K562 (cell line): ENCODE measurements at regions of chr6 and their contacts with region 1.

Region 1: DNA sequence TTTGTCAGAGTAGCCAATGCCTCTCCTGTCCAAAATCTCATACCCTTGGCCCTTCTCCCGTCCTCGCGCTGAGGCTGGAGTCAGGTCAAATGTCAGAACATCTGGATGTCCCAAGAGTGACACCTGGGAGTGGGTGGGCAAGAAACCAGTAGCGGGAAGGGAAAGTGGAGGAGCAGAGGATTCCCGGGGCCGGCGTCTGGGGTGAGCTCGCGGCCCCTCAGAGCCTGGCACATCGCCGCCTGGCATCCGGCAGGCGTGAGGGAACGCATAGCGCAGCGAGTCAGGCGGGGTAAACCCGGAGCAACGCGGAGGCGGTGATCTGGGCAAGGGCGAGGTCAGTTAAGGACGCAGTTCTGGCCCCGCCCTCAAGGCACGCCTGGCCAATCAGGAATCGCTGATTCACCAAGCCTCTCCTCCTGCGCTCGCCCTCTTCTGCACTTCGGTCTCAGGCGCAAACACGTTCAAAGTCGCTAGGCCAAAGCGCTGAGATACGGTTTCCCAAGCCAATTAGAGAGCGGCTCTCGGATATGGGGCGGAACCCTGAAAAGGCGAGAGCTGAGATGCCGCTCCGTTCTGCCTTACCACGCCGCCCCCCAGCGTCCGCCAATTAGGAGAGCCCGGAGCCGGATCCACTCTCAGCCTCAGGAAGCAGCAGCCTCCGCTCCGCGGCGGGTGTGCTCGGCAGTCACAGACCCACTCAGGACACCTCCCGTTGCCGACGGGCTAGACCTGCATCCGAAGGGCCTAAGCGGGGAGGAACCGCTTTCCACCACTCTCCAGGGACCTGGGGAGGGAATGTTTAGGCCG is 22.5 kb downstream of the VPS52 start:
- DNase-seq: peak; percentile 95 to 100 (median 96)
- ATAC-seq: peak; percentile 97
- H3K4me3 ChIP-seq: peak overlapping the region; percentile 53
- H3K27ac ChIP-seq: peak overlapping the region; percentile 91
- H3K4me1 ChIP-seq: peaks cover 22 to 31% of the 10 kb centered on the region in 2 experiments
- H3K27me3 ChIP-seq: peaks cover 4 to 6% of the 10 kb centered on the region in 2 experiments; a peak in 2 of 5 replicates
- CTCF ChIP-seq: peak; percentile 34 to 52 (median 48); a peak in 5 of 6 replicates
- EP300 ChIP-seq: 0 out of 2 replicates have a peak, but pooled peaks have one; percentile 6
- POLR2A ChIP-seq: peak; percentile 96
- RAD21 ChIP-seq: 0 out of 4 replicates have a peak, but pooled peaks of 1 of the 2 experiments have one; percentile 25

Region 2: DNA sequence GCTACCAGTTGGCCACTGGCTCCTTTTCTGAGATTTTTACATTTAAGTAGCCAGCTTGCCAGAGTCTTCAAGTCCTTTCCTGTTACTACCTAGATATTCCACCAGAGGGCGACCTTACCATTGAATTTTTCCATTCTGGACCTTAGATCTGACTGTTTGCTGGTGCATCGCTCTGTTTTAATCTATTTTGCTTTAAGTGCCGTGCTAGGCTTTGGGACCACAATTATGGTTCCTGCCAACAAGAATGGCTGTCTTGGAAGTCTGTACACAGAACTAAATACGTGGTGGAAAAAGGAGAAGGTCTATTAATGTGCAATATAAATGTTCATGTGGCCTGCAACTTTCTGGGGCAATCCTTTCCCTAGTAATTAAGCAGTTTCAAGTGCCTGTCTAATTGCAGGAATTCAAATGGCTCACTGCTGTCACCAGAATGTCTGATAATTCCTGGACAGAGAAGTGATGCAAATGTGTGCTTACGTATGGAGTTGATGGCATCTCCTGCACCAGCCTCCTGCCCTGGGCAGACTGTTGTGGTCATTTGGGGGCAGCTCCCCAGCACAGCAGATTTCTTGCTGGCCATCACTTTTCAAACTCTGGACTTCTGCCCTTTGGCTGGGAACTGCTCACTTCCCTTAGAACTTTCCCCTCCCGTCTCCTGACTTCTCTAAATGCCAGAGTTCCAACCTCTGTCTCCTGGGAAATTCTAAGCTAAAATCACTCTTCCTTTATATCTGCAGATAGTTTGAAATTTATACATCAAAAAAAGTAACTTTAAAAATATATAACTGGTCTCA is 234.1 kb before region 1 on chr6:
- CTCF ChIA-PET with region 1: interaction called, 7 read pairs
- POLR2A ChIA-PET with region 1: no interaction called
- in situ Hi-C with region 1: loop called (anchors 5 kb)
- intact Hi-C with region 1: loop called (anchors 1 kb)
- DNase-seq: peak; percentile 67 to 79 (median 73)
- ATAC-seq: peak; percentile 88
- H3K4me3 ChIP-seq: no peak overlapping the region
- H3K27ac ChIP-seq: no peak overlapping the region
- H3K4me1 ChIP-seq: no peaks in the 10 kb centered on the region
- H3K27me3 ChIP-seq: peaks cover 28 to 37% of the 10 kb centered on the region in 2 experiments; a peak in 4 of 5 replicates
- CTCF ChIP-seq: peak; percentile 74 to 92 (median 77)
- EP300 ChIP-seq: no peak
- POLR2A ChIP-seq: no peak
- RAD21 ChIP-seq: peak; percentile 80 to 87

Region 3: GRCh38 chr6:33126101-33126714 is 122.9 kb before region 1 on chr6:
- CTCF ChIA-PET with region 1: interaction called, 24 read pairs
- POLR2A ChIA-PET with region 1: interaction called, 12 read pairs
- in situ Hi-C with region 1: no loop called
- intact Hi-C with region 1: loop called (anchors 1 kb)
- DNase-seq: peak; percentile 75 to 79 (median 77)
- ATAC-seq: peak; percentile 91
- H3K4me3 ChIP-seq: no peak overlapping the region
- H3K27ac ChIP-seq: no peak overlapping the region
- H3K4me1 ChIP-seq: no peaks in the 10 kb centered on the region
- H3K27me3 ChIP-seq: peaks cover 5 to 26% of the 10 kb centered on the region in 2 experiments; a peak in 3 of 5 replicates
- CTCF ChIP-seq: peak; percentile 74 to 90 (median 79)
- EP300 ChIP-seq: no peak
- POLR2A ChIP-seq: no peak
- RAD21 ChIP-seq: peak in 1 of 2 experiments; percentile 41; a peak in 2 of 4 replicates

Region 4: GRCh38 chr6:33200219-33201146 is 48.6 kb before region 1 on chr6 and contains the starts of genes RXRB and SLC39A7:
- CTCF ChIA-PET with region 1: interaction called, 4 read pairs
- POLR2A ChIA-PET with region 1: interaction called, 7 read pairs
- in situ Hi-C with region 1: no loop called
- intact Hi-C with region 1: loop called (anchors 2 kb)
- DNase-seq: peak; percentile 88 to 100 (median 94)
- ATAC-seq: peak; percentile 74
- H3K4me3 ChIP-seq: peak within 1 kb of the TSS; percentile 65
- H3K27ac ChIP-seq: peak within 1 kb of the TSS; percentile 99
- H3K4me1 ChIP-seq: peaks cover 48 to 51% of the 10 kb centered on the region in 2 experiments; a peak in 4 of 5 replicates
- H3K27me3 ChIP-seq: no peaks in the 10 kb centered on the region
- CTCF ChIP-seq: no peak
- EP300 ChIP-seq: no peak
- POLR2A ChIP-seq: peak; percentile 99
- RAD21 ChIP-seq: no peak; a peak in 1 of 4 replicates
- polyA plus RNA-seq, gene RXRB: 0.76 to 2.1 TPM
- polyA plus RNA-seq, gene SLC39A7: 21.7 to 23.5 TPM

Region 5: DNA sequence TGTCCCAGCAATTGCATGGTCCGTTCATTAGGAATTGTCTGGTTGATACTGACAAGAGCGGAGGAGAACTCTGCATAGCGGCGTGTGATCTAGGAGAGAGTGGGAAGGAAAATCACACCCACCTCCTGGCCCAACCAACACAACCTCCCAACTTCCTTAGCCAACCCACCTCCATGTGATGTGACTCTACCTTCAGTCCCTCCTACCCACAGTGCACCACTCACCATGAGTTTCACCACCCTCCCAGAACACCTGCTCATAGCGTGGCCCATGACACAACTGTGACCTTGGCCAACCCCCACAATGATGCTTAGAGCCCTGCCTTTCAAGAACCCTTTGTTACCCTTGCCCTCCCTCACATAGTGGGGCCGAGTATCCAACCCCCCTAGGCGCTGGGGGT is 14.9 kb after region 1 on chr6:
- CTCF ChIA-PET with region 1: interaction called, 4 read pairs
- POLR2A ChIA-PET with region 1: interaction called, 35 read pairs
- in situ Hi-C with region 1: no loop called
- intact Hi-C with region 1: no loop called
- DNase-seq: no peak
- ATAC-seq: peak; percentile 52
- H3K4me3 ChIP-seq: no peak overlapping the region
- H3K27ac ChIP-seq: no peak overlapping the region
- H3K4me1 ChIP-seq: no peaks in the 10 kb centered on the region; a peak in 1 of 5 replicates
- H3K27me3 ChIP-seq: no peaks in the 10 kb centered on the region
- CTCF ChIP-seq: no peak
- EP300 ChIP-seq: no peak
- POLR2A ChIP-seq: no peak; the same call in 1 of the 2 replicates
- RAD21 ChIP-seq: no peak